ENCODE measurements at regions of chr10 and their contacts with region 1.

Region 1: GRCh38 chr10:18214691-18215563 is 74.7 kb downstream of the CACNB2 start:
- DNase-seq: no peak
- ATAC-seq: peak; percentile 44 to 91 (median 70)
- H3K4me3 ChIP-seq: no peak overlapping the region
- H3K27ac ChIP-seq: no peak overlapping the region
- H3K4me1 ChIP-seq: no peaks in the 10 kb centered on the region
- H3K27me3 ChIP-seq: no peaks in the 10 kb centered on the region
- CTCF ChIP-seq: peak; percentile 72

Region 2: GRCh38 chr10:17841050-17841449 is 373.9 kb before region 1 on chr10:
- intact Hi-C with region 1: loop called in 1 of 2 experiments (anchors 5 kb)
- DNase-seq: no peak
- ATAC-seq: no peak
- H3K4me3 ChIP-seq: no peak overlapping the region
- H3K27ac ChIP-seq: no peak overlapping the region
- H3K4me1 ChIP-seq: no peaks in the 10 kb centered on the region
- H3K27me3 ChIP-seq: peaks cover 0 to 5% (median 0%) of the 10 kb centered on the region in 3 donors
- CTCF ChIP-seq: no peak

Region 3: DNA sequence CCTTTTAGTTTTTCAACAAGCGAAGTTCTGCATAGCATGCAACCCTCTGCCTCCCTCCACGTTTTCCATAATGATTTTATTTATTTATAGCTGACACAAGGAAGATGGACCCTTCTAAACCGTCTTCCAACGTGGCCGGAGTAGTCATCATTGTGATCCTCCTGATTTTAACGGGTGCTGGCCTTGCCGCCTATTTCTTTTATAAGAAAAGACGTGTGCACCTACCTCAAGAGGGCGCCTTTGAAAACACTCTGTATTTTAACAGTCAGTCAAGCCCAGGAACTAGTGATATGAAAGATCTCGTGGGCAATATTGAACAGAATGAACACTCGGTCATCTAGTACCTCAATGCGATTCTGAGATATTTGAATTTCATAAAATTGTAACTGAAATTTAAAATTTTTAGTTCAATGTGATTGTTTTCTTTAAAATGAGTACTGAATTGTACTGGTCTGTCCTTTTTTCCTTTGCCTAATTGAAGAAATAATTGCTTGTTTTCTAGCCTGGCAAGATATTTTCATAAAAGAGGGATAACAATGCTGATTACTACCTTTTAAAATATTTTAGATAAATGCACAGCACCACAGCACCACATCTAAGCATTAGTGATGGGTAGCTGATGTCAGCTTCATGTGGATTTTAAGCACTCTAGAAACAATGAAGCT is 304.7 kb before region 1 on chr10:
- intact Hi-C with region 1: loop called (anchors 5 to 10 kb)
- DNase-seq: no peak
- ATAC-seq: peak in 1 of 4 donors; percentile 61
- H3K4me3 ChIP-seq: no peak overlapping the region
- H3K27ac ChIP-seq: no peak overlapping the region
- H3K4me1 ChIP-seq: no peaks in the 10 kb centered on the region
- H3K27me3 ChIP-seq: no peaks in the 10 kb centered on the region
- CTCF ChIP-seq: peak; percentile 55

Region 4: GRCh38 chr10:18079665-18080295 is 135.1 kb before region 1 on chr10:
- intact Hi-C with region 1: no loop called
- DNase-seq: no peak
- ATAC-seq: no peak
- H3K4me3 ChIP-seq: no peak overlapping the region
- H3K27ac ChIP-seq: no peak overlapping the region
- H3K4me1 ChIP-seq: no peaks in the 10 kb centered on the region
- H3K27me3 ChIP-seq: no peaks in the 10 kb centered on the region
- CTCF ChIP-seq: no peak

Region 5: DNA sequence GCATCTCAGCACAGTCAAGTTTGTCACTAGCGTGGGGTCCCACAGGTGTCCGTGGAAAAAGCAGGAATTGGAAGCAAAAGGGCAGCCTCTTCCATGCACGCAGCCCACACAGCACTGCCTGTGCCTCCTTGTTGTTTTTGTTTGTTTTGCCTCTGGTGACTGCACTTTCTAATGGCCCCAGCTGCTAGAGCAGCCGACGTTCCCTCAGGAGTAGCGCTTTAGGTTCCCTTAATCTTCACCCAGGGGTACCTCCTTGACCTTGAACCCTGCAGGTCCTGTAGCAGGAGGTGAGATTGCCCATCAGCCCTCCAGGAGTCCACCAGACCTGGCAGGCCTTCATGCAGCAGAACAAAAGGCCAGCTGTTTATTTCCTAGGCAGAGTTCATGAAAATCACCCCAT is 135.4 kb after region 1 on chr10:
- intact Hi-C with region 1: no loop called
- DNase-seq: no peak
- ATAC-seq: no peak
- H3K4me3 ChIP-seq: no peak overlapping the region
- H3K27ac ChIP-seq: no peak overlapping the region
- H3K4me1 ChIP-seq: no peaks in the 10 kb centered on the region
- H3K27me3 ChIP-seq: no peaks in the 10 kb centered on the region
- CTCF ChIP-seq: no peak